PC-9 (cell line): ENCODE measurements at regions of chr10 and their contacts with region 1.

Region 1: GRCh38 chr10:34666008-34666705 is 148.9 kb downstream of the PARD3 start:
- DNase-seq: peak; percentile 66 to 84
- H3K4me3 ChIP-seq: no peak overlapping the region
- H3K27ac ChIP-seq: peak overlapping the region; percentile 74
- H3K4me1 ChIP-seq: peaks cover 25% of the 10 kb centered on the region
- H3K27me3 ChIP-seq: no peaks in the 10 kb centered on the region
- CTCF ChIP-seq: peak; percentile 72

Region 2: DNA sequence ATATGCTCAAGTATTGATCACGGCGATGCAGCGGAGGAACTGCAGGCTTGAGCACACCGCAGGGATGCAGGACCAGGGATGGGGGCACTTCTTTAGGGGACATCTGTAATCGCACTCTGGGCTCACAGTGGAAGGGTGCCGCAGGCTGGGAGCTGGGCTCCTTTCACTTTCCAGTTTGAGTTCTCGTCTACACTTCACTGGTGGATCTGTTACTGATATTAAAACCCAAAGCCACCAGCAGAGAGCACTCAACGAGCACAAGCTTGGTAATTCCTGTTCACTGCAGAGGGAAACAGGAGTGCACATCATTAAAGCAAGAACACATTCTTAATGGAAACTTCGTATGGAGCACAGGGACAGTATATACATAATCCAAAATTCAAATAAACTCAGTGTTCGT is 57.6 kb after region 1 on chr10:
- CTCF ChIA-PET with region 1: no interaction called
- POLR2A ChIA-PET with region 1: no interaction called
- intact Hi-C with region 1: loop called (anchors 5 kb)
- DNase-seq: no peak
- H3K4me3 ChIP-seq: no peak overlapping the region
- H3K27ac ChIP-seq: no peak overlapping the region
- H3K4me1 ChIP-seq: peaks cover 42% of the 10 kb centered on the region
- H3K27me3 ChIP-seq: no peaks in the 10 kb centered on the region
- CTCF ChIP-seq: no peak

Region 3: DNA sequence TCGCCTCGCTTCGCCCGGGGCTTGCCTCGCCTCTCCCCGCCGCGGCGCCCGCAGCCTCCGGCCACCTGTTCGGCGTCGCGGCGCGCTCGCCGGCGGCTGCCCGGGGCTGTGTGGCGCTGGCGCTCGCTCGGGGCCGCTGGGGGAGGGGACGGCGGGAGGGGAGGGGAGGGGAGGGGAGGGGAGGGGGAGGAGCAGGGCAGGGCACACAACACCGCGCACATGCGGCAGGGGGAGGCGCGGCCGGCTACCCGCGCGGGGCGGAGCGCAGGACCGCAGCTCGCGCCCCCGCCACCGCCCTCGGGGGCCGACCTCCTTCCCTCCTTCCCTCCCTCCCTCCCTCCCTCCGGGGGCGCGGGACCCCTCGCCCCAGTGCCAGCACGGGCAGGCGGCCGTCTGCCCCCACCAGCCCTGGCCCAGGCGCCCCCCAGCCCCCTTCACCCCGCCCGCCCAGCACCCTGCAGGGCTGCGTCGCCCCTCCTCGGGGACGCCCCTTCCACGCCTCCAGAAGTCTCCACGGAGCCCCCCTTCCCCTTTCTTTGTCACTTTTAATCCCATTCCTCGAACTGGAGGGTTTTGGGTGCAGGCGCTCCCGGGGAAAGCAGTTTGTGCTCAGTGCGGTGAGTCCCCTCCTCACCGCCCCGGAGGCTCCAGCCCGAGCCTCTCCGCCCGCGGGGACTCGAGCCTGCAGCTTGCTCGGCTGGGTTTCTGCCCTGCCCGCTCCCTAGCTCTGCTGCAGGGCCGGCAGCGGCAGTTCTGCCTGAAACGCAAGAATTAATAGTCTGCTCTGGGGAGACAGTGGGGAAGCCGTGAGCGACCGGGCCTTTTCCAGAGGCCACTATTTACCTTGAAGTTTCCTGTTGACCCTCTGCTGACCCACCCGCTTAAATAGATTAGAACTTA is 149.3 kb after region 1 on chr10 and contains the start of gene PARD3:
- CTCF ChIA-PET with region 1: no interaction called
- POLR2A ChIA-PET with region 1: no interaction called
- intact Hi-C with region 1: loop called (anchors 1 kb)
- DNase-seq: peak in 1 of 2 experiments; percentile 64
- H3K4me3 ChIP-seq: peak within 1 kb of the TSS; percentile 63
- H3K27ac ChIP-seq: no peak within 1 kb of the TSS
- H3K4me1 ChIP-seq: peaks cover 25% of the 10 kb centered on the region
- H3K27me3 ChIP-seq: no peaks in the 10 kb centered on the region
- CTCF ChIP-seq: no peak
- total RNA-seq, gene PARD3: 57.4 and 61.9 TPM in 2 replicates

Region 4: DNA sequence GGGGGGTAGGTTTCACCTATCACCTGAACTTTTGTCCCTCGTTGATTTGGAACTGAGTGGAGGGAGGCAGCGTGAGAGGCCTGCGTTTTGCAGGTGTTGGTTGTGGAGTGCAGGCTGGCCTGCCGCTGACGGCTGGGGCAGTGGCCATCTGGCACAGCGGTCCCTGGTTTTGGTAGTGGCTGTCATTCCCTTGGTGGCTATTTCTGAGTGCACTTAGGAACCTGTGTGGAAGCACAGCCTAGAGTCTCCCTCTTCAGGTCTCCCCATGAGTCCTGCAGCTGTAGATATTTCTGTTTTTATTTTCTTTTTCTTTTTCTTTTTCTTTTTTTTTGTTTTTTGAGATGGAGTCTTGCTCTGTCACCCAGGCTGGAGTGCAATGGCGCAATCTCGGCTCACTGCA is 294.8 kb after region 1 on chr10:
- CTCF ChIA-PET with region 1: interaction called, 3 read pairs
- POLR2A ChIA-PET with region 1: no interaction called
- intact Hi-C with region 1: loop called (anchors 1 kb)
- DNase-seq: no peak
- H3K4me3 ChIP-seq: no peak overlapping the region
- H3K27ac ChIP-seq: no peak overlapping the region
- H3K4me1 ChIP-seq: 0 out of 2 replicates have a peak, but pooled peaks cover 2% of the 10 kb centered on the region
- H3K27me3 ChIP-seq: no peaks in the 10 kb centered on the region
- CTCF ChIP-seq: peak; percentile 45

Region 5: DNA sequence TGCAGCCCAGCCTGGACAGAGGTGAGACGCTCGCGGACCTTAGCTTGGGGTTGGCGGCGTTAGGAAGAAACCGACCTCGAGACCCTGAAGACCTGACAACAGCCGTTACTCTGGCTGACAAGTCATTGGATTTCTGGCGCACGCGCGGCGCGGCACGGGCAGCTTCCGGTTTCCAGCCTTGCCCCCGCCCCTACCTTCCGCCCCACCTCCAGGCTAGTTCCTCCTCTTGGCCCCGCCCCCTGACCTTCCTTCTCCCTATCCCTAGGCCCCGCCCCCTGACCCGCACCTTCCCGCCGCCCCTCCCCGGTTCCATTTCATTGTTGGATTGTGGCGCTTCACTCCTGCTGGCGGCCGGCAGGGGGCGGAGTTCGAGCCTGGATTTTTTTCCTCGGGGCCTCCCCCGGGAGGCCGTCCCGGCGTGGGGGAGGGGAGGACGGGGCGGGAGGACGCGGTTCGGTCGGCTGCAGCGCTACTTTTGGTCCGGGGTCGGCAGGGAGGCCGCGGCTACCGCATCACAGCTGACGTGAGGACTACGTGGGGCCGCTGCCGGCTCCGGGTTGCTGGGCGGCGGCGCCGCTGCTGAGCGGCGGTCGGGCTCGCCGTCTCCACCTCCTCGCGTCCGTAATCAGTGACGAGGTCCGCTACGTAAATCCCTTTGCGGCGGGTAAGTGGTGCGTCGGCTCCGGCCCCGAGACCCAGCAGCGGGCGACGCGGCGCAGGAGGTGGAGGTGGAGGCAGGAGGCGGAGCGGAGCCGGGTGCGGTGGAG is 460.6 kb after region 1 on chr10 and contains the start of gene CREM:
- CTCF ChIA-PET with region 1: no interaction called
- POLR2A ChIA-PET with region 1: no interaction called
- intact Hi-C with region 1: loop called (anchors 2 kb)
- DNase-seq: peak; percentile 73 to 97
- H3K4me3 ChIP-seq: peak within 1 kb of the TSS; percentile 90
- H3K27ac ChIP-seq: peak within 1 kb of the TSS; percentile 88
- H3K4me1 ChIP-seq: peaks cover 16% of the 10 kb centered on the region
- H3K27me3 ChIP-seq: no peaks in the 10 kb centered on the region
- CTCF ChIP-seq: peak; percentile 86
- total RNA-seq, gene CREM: 25.6 and 28.3 TPM in 2 replicates